Heart left ventricle (tissue), 16 donors: ENCODE measurements at regions of chr5 and their contacts with region 1.

Region 1: GRCh38 chr5:59673438-59674058 is 220.0 kb downstream of the PDE4D start:
- DNase-seq: no peak
- ATAC-seq: no peak
- H3K4me3 ChIP-seq: no peak overlapping the region
- H3K27ac ChIP-seq: no peak overlapping the region
- H3K4me1 ChIP-seq: no peaks in the 10 kb centered on the region
- H3K27me3 ChIP-seq: no peaks in the 10 kb centered on the region
- CTCF ChIP-seq: peak; percentile 76 to 92 (median 86)
- POLR2A ChIP-seq: no peak

Region 2: DNA sequence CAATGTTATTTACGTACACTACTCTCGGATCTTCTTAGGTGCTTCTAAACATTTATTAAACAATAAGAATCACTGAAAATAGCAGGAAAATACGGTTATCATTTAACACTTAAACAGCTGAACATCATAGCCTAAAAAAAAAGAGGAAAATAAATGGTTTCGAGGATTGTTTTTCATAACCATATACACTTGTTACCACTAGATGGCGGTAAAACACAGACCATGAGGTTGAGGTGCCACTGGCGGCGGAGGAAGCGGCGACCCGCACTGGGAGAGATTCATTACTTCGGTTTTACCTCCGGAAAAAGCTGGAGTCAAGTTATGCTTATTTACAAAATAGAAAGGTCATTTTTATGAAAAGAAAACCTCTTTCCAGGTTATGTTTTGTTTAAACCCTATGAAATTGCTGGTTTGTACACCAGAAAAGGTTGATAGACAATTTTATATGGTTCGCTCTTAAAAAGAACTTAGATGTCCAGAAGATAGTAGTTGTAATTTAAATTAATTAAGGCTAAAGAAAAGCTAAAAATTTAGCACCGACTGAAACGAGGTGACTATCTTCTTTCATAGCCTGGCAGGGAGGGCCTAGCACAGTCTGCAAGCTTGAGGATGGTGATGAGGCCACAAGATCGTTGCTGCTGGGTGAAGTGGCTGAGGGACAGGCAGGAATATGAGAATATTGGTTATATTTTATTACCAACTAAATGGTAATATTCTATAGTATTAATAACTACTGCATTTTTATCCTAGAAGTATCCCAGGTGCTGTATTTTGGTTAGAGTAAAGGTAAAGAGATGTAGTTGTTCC is 484.9 kb before region 1 on chr5:
- intact Hi-C with region 1: loop called in 6 of 10 experiments (anchors 5 to 10 kb)
- DNase-seq: peak; percentile 62 to 80 (median 73)
- ATAC-seq: peak; percentile 58 to 83 (median 80)
- H3K4me3 ChIP-seq: peak overlapping the region in 10 of 12 donors; percentile 2 to 51 (median 34)
- H3K27ac ChIP-seq: peak overlapping the region in 6 of 12 donors; percentile 14 to 76 (median 20)
- H3K4me1 ChIP-seq: peaks cover 0 to 29% (median 0%) of the 10 kb centered on the region in 12 donors
- H3K27me3 ChIP-seq: no peaks in the 10 kb centered on the region
- CTCF ChIP-seq: peak; percentile 77 to 92 (median 83)
- POLR2A ChIP-seq: no peak

Region 3: DNA sequence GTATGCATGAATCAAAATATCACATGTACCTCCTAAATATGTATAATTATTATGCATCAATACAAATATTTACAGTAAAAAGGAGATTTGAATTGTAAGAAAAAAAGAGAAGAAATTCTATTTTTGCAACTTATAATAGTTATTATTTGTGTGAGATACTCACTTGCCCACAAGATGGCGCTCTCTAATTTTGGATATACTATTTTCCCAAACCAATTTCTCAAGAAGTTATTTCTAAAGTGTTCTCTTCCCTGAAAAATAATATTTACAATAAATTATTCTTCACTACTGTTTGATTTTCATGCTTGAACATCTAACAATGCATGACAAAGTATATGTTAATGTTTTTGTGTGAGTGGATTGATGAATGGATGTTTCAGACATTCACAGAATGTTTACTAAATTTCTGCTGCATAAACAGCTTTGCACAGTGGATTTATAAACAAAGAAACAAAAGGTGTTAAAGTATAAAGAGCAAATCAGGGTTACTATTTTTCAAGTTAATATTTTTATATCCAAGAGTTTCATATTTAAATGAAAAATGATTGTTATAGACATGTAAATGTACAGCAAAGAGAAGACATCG is 283.4 kb before region 1 on chr5:
- intact Hi-C with region 1: loop called (anchors 1 to 5 kb)
- DNase-seq: peak in 1 of 5 donors; percentile 8
- ATAC-seq: no peak
- H3K4me3 ChIP-seq: no peak overlapping the region
- H3K27ac ChIP-seq: no peak overlapping the region
- H3K4me1 ChIP-seq: no peaks in the 10 kb centered on the region
- H3K27me3 ChIP-seq: no peaks in the 10 kb centered on the region
- CTCF ChIP-seq: peak; percentile 58 to 88 (median 74)
- POLR2A ChIP-seq: no peak

Region 4: DNA sequence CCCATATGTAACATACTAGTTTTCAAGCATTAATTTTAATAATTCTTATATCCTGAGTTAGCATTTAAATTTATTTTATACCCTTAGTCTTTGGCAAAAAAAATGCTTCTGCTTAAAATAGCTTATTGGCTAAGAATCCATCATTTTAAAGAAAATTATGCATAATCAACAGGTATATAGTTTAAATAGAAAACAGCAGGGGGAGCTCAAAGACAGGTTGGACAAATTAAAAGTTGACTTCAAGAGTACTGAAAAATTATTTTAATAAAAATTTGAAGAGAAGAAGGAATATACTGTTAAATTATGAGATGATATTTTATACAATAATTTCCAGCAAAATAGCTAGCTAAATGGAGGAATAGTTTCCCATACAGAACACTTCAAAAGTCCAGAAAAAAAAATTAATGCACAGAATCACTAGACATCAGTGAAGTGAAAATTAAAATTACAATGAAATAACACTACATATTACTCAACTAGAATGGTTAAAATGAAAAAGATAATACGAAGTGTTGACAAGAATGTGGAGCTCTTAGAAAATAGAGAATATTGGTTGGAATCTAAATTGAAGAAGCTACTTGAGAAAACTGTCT is 167.2 kb before region 1 on chr5:
- intact Hi-C with region 1: loop called (anchors 2 to 5 kb)
- DNase-seq: no peak
- ATAC-seq: no peak
- H3K4me3 ChIP-seq: no peak overlapping the region
- H3K27ac ChIP-seq: no peak overlapping the region
- H3K4me1 ChIP-seq: no peaks in the 10 kb centered on the region
- H3K27me3 ChIP-seq: no peaks in the 10 kb centered on the region
- CTCF ChIP-seq: peak; percentile 40 to 74 (median 48)
- POLR2A ChIP-seq: no peak

Region 5: DNA sequence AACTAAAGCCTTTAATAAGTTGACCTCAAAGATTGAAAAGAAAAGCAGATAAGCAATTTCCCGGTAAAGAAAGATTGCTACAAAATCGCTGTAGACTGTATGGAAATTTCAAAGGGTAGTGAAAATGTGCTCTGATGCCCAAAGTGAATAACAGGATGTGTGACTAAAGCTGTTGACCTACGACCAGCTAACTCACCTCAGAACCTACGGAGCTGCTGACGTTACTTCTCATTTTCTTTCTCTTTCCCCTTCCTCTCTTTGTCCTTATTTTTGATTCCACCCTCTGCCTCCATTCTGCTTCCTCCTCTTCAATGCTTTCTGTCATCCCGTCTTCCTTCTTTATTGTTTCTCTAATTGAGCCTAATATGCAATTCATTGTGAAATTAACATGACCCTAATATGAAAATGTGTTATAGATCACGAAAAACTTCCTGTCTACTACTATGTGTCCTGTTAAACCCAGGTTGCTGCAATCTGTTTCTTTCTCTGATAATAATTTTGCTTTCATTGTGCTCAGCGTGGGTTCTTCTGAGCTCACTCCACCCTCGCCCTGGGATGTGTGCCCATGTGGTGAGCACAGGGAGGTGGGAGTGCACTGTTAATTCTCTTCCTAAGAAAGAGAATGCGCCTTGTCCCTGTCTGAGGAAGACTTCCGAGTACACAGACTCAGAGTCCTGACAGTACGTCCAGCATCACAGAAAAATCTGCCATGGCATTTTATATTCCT is 117.0 kb after region 1 on chr5:
- intact Hi-C with region 1: loop called (anchors 5 to 10 kb)
- DNase-seq: peak in 1 of 5 donors; percentile 34
- ATAC-seq: peak in 3 of 4 donors; percentile 38 to 86 (median 44)
- H3K4me3 ChIP-seq: peak overlapping the region in 4 of 12 donors; percentile 2 to 22 (median 14)
- H3K27ac ChIP-seq: peak overlapping the region in 8 of 12 donors; percentile 17 to 66 (median 44)
- H3K4me1 ChIP-seq: peaks cover 0 to 4% (median 0%) of the 10 kb centered on the region in 12 donors
- H3K27me3 ChIP-seq: peaks cover 0 to 4% (median 0%) of the 10 kb centered on the region in 9 donors
- CTCF ChIP-seq: no peak
- POLR2A ChIP-seq: no peak